Breast epithelium (tissue), 4 donors: ENCODE measurements at regions of chr7 and their contacts with region 1.

Region 1: DNA sequence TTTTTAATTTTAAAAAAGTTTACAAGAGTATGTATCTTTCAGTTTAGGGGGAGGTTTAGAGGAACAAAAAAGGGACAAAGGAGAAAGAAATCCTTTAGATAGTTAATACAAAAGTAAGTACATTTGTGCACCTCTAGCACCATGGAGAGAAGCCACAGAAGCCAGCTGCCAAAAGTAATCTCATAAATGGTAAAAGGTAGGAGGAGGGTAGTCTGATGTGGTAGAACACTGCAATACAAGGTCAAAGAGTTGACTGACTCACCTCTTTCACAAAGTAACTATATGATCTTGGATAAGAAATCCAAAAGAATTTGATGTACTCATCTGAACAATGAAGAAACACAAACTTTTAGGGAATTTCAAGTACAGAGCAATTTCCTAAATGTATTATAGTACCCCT is 68.1 kb downstream of the CNOT4 start:
- DNase-seq: no peak
- H3K4me3 ChIP-seq: no peak overlapping the region
- H3K27ac ChIP-seq: no peak overlapping the region
- H3K4me1 ChIP-seq: no peaks in the 10 kb centered on the region
- H3K27me3 ChIP-seq: no peaks in the 10 kb centered on the region
- CTCF ChIP-seq: no peak
- POLR2A ChIP-seq: no peak

Region 2: DNA sequence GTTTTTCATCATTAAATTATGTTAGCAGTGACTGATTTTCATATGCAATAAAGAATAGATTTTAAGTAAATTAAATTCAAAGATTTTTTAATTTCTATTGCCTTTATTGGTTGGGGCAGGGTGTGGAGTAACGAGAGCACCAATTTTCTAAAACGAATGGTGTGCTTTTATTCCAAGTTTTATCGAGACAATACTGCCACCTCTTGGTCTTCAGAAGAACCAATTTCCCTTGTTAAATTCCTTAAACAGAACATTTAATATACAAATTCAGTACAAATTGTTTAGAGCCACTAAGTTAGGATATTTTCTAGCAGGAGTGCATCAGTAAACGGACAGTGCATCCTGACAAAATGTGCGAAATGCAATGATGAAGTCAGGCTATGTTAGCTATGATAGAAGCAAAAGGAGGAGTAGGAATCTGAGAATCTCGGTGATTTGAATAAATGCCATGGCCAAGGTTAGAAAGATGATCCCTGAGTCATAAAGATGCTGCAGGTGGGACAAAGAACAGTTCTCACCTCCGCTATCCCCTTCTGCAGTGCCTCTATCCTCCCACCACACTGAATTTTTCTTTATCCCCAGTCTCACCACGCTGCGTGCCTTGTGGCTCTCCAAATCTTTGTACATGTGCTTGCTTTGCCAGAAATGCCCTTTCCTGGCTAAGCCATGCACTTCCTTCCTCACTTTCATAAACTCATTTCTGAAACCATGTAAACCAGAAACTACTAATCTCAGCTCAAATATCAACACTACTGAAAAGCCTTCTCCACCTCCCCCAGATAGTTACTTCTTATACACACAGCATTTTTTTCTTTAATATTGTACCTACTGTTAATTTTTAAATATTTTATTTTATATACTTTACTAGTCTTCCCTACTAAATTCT is 487.4 kb before region 1 on chr7:
- intact Hi-C with region 1: loop called (anchors 5 kb)
- DNase-seq: no peak
- H3K4me3 ChIP-seq: no peak overlapping the region
- H3K27ac ChIP-seq: no peak overlapping the region
- H3K4me1 ChIP-seq: no peaks in the 10 kb centered on the region
- H3K27me3 ChIP-seq: no peaks in the 10 kb centered on the region
- CTCF ChIP-seq: peak in 2 of 3 donors; percentile 52 to 57
- POLR2A ChIP-seq: no peak

Region 3: DNA sequence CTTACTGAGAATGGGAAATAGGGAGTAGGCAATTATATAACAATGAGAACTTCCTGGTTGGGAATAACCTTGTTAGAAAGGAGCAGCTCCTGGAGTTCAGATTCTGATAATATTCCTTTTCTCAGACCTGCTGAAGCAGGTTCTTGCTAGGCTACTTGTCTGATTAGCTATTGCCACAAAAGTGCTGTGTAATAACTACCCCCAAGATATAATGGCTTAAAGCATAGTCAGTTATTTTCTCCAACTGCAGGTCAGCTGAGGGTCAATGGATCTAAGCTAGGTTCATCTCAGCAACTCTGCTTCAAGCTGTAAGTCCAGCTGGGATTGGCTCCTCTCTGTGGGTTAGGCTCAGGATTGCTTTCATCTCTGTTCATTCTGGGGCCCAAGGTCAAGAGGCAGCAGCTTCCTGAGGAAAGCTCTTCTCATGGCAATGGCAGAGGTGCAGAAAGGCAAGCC is 77.5 kb after region 1 on chr7:
- intact Hi-C with region 1: no loop called
- DNase-seq: no peak
- H3K4me3 ChIP-seq: no peak overlapping the region
- H3K27ac ChIP-seq: no peak overlapping the region
- H3K4me1 ChIP-seq: no peaks in the 10 kb centered on the region
- H3K27me3 ChIP-seq: no peaks in the 10 kb centered on the region
- CTCF ChIP-seq: no peak
- POLR2A ChIP-seq: no peak